ENCODE measurements at regions of chr1 and their contacts with region 1.

Region 1: DNA sequence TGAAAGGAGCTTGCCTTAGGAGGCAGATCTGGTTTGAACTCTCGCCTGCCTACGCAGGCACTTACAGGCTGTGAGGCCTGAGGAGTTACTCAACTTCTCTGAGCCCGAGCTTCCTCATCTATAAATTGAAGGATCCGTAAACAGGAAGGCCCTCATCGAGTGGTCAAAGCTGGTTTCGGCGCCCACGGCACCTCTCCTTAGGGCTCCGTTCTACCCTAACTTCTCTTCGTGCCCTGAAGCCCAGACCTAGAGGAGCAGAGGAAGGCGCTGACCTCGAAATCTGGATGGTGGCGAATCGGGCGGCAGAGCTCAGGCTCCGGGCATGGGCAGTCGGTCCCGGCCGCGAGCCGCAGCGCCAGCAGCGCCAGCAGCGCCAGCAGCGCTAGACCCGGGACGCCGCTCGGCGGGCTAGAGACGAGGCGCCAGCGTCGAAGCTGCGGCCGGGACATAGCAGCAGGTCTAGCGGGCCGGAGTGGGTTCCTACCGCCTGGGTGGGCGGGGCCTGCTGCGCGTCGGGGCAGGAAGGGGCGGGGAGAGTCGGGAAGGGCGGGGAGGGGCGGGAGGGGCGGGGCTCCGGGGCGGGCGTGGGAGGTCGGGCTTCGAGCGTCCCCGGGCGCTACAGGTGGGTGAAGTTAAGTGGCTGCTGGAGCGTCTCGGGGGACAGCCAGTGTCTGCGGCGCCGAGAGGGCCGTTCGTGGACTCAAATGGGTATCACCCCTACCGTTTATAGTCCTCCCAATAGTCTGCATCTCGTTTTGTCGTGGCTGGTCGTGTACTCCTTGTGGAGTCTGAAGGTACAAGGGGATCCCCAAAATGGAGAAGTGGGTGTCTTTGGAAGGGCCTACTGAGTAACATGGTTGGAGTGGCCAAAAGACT is at the start of gene CTBS:
- DNase-seq: peak; percentile 90
- H3K4me3 Mint-ChIP-seq: peak within 1 kb of the TSS; percentile 98
- H3K27ac Mint-ChIP-seq: peak within 1 kb of the TSS; percentile 100
- H3K4me1 Mint-ChIP-seq: peaks cover 35% of the 10 kb centered on the region
- H3K27me3 Mint-ChIP-seq: peaks cover 1% of the 10 kb centered on the region
- total RNA-seq, gene CTBS: 22.9 to 24.2 TPM

Region 2: GRCh38 chr1:84077476-84078107 is 496.6 kb before region 1 on chr1:
- CTCF ChIA-PET with region 1: no interaction called
- POLR2A ChIA-PET with region 1: no interaction called
- intact Hi-C with region 1: loop called (anchors 5 kb)
- DNase-seq: peak; percentile 78
- H3K4me3 Mint-ChIP-seq: peak overlapping the region; percentile 83
- H3K27ac Mint-ChIP-seq: peak overlapping the region; percentile 38
- H3K4me1 Mint-ChIP-seq: peaks cover 11% of the 10 kb centered on the region
- H3K27me3 Mint-ChIP-seq: peaks cover 3% of the 10 kb centered on the region

Region 3: DNA sequence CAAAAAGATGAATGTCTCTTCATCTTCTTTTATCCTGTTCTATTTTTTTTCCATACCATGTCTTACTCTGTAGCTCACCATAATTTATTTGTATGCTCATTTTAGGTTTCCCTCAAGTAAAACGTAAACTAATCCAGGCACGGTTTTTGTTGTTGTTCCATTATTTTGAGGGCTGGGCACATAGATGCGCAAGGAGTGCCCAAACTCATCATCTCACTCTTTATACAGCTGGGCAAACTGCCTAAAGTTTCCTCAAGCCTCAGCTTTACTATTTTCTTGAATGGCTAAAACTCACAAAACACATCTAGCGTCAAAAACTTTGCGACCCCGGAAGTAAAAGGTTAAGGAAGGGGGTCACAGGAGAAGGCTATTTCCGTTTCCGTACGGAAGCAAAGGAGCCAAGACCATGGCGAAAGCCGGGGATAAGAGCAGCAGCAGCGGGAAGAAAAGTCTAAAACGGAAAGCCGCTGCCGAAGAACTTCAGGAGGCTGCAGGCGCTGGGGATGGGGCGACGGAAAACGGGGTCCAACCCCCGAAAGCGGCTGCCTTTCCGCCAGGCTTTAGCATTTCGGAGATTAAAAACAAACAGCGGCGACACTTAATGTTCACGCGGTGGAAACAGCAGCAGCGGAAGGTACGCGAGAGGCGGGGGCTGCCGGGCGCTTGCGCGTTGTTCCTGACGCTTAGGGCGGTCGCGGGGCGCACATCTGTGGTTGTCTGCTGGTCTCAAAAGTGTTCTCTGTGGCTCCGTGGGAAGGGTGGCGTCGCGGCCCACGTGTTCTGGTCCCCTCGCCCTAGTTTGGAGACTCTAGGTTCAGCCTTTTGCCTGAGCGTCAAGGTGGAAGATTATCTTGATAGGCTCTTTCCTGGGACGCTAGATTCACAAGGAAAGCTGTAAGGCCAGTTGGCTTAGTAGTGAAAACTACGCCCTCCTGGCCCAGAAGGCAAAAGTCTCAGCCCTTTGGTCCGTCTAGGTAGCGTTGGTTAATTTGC is 95.0 kb before region 1 on chr1 and contains the start of gene RPF1:
- CTCF ChIA-PET with region 1: interaction called, 6 read pairs
- POLR2A ChIA-PET with region 1: interaction called, 29 read pairs
- intact Hi-C with region 1: loop called (anchors 1 kb)
- DNase-seq: peak; percentile 82
- H3K4me3 Mint-ChIP-seq: peak within 1 kb of the TSS; percentile 96
- H3K27ac Mint-ChIP-seq: peak within 1 kb of the TSS; percentile 96
- H3K4me1 Mint-ChIP-seq: peaks cover 34% of the 10 kb centered on the region
- H3K27me3 Mint-ChIP-seq: peaks cover 16% of the 10 kb centered on the region
- total RNA-seq, gene RPF1: 55.0 to 56.5 TPM

Region 4: DNA sequence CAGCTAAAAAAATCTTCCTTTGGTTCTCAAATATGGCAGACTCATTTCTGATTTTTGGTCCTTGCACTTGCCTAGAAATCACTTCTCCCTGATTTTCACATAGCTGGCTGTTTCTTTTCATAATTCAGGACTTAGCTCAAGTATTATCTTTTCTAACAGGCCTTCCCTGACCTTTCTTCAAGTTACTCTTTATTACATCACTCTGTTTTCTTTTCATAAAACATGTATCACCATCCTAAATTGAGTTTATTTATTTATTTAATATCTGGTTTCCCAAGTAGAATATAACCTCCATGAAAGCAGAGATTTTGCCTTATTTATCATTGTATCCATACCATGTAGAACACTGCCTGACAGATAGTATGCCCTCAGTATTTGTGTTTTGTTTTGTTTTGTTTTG is 49.6 kb before region 1 on chr1:
- CTCF ChIA-PET with region 1: no interaction called
- POLR2A ChIA-PET with region 1: no interaction called
- intact Hi-C with region 1: no loop called
- DNase-seq: no peak
- H3K4me3 Mint-ChIP-seq: no peak overlapping the region
- H3K27ac Mint-ChIP-seq: no peak overlapping the region
- H3K4me1 Mint-ChIP-seq: no peaks in the 10 kb centered on the region
- H3K27me3 Mint-ChIP-seq: no peaks in the 10 kb centered on the region

Region 5: GRCh38 chr1:84598846-84599741 is 24.9 kb after region 1 on chr1:
- CTCF ChIA-PET with region 1: interaction called, 8 read pairs
- POLR2A ChIA-PET with region 1: interaction called, 17 read pairs
- intact Hi-C with region 1: loop called (anchors 1 kb)
- DNase-seq: no peak
- H3K4me3 Mint-ChIP-seq: peak overlapping the region; percentile 27
- H3K27ac Mint-ChIP-seq: peak overlapping the region; percentile 76
- H3K4me1 Mint-ChIP-seq: peaks cover 29% of the 10 kb centered on the region
- H3K27me3 Mint-ChIP-seq: peaks cover 2% of the 10 kb centered on the region

Region 6: DNA sequence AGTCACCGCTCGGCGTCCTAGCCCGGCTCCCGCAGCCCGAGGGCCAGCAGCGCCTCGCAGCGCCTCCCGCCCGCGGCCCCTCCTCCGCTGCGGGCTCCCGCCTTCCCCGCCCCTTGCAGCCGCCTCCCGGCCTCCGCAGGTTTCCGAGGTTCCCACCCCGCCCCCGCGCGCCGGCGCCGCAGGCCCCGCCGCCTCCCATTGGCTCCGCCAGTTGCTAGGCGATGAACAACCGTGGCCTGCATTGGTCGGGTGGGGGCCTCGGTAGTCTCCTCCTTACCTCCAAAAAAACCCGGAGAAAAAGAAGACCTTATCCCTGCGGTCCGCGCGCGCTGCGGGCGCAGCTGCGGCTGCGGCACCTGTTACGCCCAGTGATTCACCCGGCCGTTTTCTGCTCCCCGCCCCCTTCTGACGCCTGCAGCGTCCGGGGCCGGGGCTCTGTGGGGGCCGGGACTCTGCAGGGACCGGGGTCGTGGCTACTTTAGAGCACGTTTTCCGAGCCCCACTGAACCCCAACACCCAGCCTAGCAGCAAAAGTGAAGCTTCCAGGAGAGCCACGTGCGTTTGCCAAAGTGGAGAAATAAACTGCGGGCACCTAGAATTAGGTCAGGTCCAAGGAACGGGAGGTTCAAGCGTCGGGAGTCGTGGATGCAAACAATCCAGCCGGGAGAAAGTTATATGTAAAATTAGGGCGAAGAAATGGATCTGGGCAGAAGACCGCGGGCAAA is 116.4 kb after region 1 on chr1 and contains the start of gene SSX2IP:
- CTCF ChIA-PET with region 1: no interaction called
- POLR2A ChIA-PET with region 1: no interaction called
- intact Hi-C with region 1: loop called (anchors 1 kb)
- DNase-seq: peak; percentile 99
- H3K4me3 Mint-ChIP-seq: peak within 1 kb of the TSS; percentile 94
- H3K27ac Mint-ChIP-seq: peak within 1 kb of the TSS; percentile 80
- H3K4me1 Mint-ChIP-seq: peaks cover 53% of the 10 kb centered on the region
- H3K27me3 Mint-ChIP-seq: peaks cover 2% of the 10 kb centered on the region
- total RNA-seq, gene SSX2IP: 10.9 to 11.6 TPM